Lower lobe of right lung (tissue), 2 donors: ENCODE measurements at regions of chr6 and their contacts with region 1.

Region 1: DNA sequence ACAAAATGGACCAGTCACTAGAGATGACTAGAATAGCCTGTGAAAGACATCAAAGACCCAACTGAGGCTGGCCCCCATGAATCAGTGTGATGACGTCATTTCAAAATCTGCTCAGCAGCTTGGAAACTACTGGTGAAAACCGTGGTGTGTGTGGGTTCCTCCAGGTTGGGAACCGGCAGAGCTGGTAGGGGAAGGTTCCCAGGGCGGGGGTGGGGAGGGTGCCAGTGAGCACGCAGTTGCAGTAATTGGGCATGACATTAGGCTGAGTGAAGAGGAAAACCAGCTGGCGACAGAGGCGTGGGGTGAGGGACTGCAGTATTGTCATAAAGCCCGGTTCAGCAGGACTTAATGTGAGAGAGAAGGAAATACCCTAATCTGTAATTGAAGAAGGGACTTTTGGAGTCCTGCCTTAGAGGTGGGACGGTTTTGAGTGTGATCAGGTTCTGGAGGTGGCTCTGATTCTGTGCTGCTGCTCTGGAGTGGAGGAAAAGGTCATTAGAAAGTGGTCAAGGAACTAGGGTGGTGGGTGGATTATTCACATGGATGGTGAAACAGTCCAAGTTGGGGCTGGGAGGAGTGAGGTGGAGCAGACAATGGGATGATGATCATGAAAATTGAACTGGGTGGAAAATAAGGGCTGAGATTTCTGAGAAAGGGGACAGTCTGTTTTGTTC is 52.0 kb upstream of the MTHFD1L start:
- DNase-seq: no peak
- ATAC-seq: peak; percentile 9 to 33
- H3K4me3 ChIP-seq: no peak overlapping the region
- H3K27ac ChIP-seq: peak overlapping the region; percentile 2
- H3K4me1 ChIP-seq: peaks cover 14% of the 10 kb centered on the region
- H3K27me3 ChIP-seq: no peaks in the 10 kb centered on the region
- CTCF ChIP-seq: no peak

Region 2: GRCh38 chr6:150417899-150418826 is 395.3 kb before region 1 on chr6:
- intact Hi-C with region 1: loop called (anchors 5 kb)
- DNase-seq: no peak
- ATAC-seq: peak; percentile 88 to 96
- H3K4me3 ChIP-seq: peak overlapping the region; percentile 49
- H3K27ac ChIP-seq: peak overlapping the region; percentile 64
- H3K4me1 ChIP-seq: peaks cover 12% of the 10 kb centered on the region
- H3K27me3 ChIP-seq: no peaks in the 10 kb centered on the region
- CTCF ChIP-seq: peak; percentile 79

Region 3: GRCh38 chr6:150603176-150603575 is 210.3 kb before region 1 on chr6:
- intact Hi-C with region 1: no loop called
- DNase-seq: no peak
- ATAC-seq: no peak
- H3K4me3 ChIP-seq: no peak overlapping the region
- H3K27ac ChIP-seq: no peak overlapping the region
- H3K4me1 ChIP-seq: peaks cover 11% of the 10 kb centered on the region
- H3K27me3 ChIP-seq: no peaks in the 10 kb centered on the region
- CTCF ChIP-seq: no peak

Region 4: DNA sequence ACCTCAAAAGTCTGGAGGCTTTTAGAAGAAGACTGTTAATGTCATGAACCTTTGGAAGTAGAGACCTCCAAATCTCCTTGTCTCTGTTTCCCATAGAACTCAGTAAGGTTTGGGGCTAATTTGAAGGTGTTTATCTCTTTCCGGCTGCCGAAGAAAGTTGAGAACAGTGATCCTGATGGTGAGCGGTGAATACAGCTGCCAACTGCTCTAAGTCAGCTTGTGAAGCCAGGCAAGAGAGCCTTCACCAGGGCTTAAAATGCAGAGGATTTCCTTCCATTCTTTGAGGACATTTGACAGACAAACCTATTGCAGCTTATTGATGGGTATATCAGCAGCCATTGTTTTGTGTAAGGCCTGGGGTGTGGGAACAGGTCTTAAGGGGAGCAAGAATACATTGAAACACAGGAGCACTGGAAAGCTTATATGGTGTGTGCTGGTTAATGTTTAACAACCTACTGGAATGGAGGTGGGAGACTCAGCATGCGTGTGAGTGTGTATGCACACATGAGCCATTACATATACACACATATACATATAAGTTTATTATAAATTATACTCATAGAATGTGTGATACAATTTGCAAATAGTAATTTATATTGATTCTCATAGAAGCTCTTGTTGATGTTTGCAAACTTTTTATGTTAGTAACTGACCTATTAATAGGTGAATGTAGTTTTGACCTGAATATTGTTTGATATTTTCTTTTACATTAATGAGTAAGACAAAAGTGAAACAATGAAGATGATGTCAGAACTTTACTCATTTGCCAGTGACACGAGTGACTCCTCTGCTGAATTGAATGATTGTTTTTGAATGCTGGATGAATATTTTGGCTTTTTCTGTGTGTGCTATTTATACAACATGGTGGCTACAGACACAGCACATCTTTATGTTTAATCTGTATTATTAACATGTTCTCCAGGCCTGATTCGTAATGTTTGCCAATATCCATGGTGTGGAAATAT is 195.7 kb before region 1 on chr6:
- intact Hi-C with region 1: loop called (anchors 10 kb)
- DNase-seq: no peak
- ATAC-seq: no peak
- H3K4me3 ChIP-seq: no peak overlapping the region
- H3K27ac ChIP-seq: no peak overlapping the region
- H3K4me1 ChIP-seq: peaks cover 18% of the 10 kb centered on the region
- H3K27me3 ChIP-seq: no peaks in the 10 kb centered on the region
- CTCF ChIP-seq: no peak